ENCODE measurements at regions of chr4 and their contacts with region 1.

Region 1: GRCh38 chr4:38675146-38676121 is 11.4 kb downstream of the KLF3 start:
- DNase-seq: no peak
- H3K4me3 ChIP-seq: peak overlapping the region in 1 of 2 donors; percentile 5
- H3K27ac ChIP-seq: peak overlapping the region; percentile 98
- H3K4me1 ChIP-seq: peaks cover 95% of the 10 kb centered on the region
- H3K27me3 ChIP-seq: no peaks in the 10 kb centered on the region
- CTCF ChIP-seq: peak; percentile 74 to 90 (median 85)
- POLR2A ChIP-seq: no peak

Region 2: DNA sequence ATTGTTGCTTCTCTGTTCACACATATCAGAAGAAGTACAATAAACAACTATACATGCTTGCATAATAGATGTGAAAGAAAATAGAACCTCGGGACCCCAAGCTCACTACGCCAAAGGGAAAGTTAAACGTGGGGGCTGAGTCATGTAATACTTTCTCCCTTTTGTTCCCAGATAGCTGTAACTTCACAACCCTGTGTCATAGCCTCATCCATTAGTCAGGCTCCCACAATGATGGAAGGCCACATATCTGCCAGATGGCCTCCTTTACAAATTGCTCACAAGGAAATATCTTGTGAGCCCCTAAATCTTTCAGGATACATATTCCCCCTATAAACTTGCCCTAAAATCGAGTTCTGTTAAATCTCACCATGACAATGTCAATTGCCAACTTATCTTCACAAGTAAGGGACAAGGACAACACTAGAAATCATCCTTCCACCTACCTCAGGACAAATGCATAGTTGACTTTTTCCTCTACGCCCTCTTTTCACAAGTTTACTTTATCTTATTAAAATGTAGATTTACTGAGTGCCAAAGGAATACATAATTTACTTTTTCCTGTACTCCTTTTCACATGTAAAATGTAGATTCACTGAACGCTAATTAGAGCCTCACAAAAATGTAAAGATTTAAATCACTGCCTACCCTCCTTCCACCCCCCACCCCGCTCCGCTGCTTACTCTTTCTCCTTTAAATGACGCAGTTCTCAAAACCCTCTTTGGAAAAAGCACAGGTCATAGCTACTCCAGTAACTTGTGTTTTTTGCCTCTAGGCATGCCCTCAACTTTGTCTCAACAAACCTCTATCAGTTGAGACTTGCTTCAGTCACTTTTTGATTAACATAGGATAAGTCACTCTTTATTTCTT is 1916.9 kb before region 1 on chr4:
- intact Hi-C with region 1: no loop called
- DNase-seq: no peak
- H3K4me3 ChIP-seq: no peak overlapping the region
- H3K27ac ChIP-seq: no peak overlapping the region
- H3K4me1 ChIP-seq: no peaks in the 10 kb centered on the region
- H3K27me3 ChIP-seq: no peaks in the 10 kb centered on the region
- CTCF ChIP-seq: no peak
- POLR2A ChIP-seq: no peak

Region 3: DNA sequence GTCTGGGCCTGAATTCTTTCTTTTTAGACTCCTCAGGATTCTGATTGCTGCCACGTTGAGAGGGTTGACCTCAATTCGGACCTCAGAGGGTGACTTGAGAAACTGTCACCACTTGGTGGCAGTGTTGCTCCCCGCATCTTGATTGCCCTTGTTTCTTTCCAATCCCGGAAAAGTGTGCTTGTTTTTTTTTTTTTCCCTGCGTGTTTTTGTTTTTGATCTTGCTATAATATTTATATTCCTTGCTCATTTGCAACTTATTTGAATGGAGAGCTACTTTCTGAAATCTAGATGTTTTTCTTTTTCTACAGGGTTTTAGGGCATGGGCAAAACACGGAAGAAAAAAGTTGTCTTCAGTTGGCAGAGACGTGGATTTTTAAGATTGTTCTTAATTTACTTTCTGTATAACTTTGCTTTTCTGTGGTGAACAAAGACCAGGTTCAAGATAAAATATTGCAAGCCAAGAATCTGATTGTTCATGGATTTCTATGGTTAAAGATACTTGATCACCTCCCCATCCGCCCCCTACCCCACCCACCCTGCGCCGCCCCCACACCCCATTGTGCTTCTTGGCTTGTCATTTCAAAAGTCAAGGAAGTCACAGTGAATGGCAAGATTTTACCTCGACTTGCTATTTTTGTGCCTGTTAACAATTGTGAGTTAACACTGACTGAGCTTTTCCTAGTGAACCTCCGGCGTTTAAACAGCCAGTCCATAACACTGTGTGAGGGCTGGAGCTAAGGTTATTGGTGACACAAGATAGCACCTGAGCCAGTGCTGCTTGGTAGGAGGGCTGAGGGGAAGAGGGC is 613.1 kb before region 1 on chr4:
- intact Hi-C with region 1: loop called (anchors 5 kb)
- DNase-seq: no peak
- H3K4me3 ChIP-seq: peak overlapping the region in 1 of 2 donors; percentile 29
- H3K27ac ChIP-seq: peak overlapping the region; percentile 3
- H3K4me1 ChIP-seq: peaks cover 6% of the 10 kb centered on the region
- H3K27me3 ChIP-seq: no peaks in the 10 kb centered on the region
- CTCF ChIP-seq: peak; percentile 49 to 77 (median 73)
- POLR2A ChIP-seq: no peak

Region 4: DNA sequence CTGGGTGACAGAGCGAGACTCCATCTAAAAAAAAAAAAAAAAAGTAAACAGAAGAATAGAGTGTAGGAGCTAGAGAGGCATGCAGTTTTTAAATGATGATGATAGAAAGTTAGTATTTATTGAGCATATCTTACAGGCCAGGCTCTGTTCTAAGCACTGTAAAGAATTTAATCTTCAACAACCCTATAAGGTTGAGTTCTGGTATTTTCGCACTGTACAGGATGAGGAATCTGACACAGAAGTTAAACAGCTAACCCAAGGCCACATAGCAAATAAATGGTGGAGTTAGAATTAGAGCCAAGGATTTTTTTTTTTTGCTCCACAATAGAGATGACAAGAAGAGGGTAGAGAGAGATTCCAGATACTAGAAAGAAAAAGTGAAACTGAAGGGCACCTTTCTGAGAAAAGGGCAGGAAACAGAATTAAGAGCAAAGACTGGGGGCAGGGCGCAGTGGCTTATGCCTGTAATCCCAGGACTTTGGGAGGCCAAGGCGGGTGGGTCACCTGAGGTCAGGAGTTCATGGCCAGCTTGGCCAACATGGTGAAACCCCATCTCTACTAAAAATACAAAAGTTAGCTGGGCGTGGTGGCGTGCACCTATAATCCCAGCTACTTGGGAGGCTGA is 442.7 kb after region 1 on chr4:
- intact Hi-C with region 1: no loop called
- DNase-seq: no peak
- H3K4me3 ChIP-seq: no peak overlapping the region
- H3K27ac ChIP-seq: no peak overlapping the region
- H3K4me1 ChIP-seq: no peaks in the 10 kb centered on the region
- H3K27me3 ChIP-seq: no peaks in the 10 kb centered on the region
- CTCF ChIP-seq: no peak
- POLR2A ChIP-seq: no peak

Measured in vagina (tissue), 2 donors.